ENCODE measurements at regions of chr6 and their contacts with region 1.

Region 1: GRCh38 chr6:79564636-79565035 is 27.4 kb upstream of the LCA5 start:
- DNase-seq: no peak
- H3K4me3 ChIP-seq: no peak overlapping the region
- H3K27ac ChIP-seq: no peak overlapping the region
- H3K4me1 ChIP-seq: no peaks in the 10 kb centered on the region
- H3K27me3 ChIP-seq: no peaks in the 10 kb centered on the region
- CTCF ChIP-seq: no peak
- EP300 ChIP-seq: no peak
- RAD21 ChIP-seq: no peak

Region 2: DNA sequence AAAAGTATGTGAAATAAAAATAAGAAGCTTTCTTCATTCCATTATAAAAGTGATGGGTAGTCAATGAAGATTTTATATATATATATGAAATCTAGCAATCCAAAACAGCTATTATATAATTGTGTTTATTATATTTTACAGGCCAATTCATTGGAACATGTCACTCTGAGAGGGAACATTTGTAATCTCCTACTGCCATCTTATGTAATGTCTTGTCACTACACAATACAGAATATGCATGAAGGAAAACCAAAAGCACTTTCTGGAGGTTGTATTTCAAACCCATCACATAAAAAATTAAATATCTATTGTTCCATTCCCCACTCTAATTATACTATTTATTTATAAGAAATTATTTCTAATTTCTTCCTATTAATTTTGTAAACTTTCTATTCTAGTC is 728.8 kb before region 1 on chr6:
- CTCF ChIA-PET with region 1: no interaction called
- POLR2A ChIA-PET with region 1: no interaction called
- DNase-seq: no peak
- H3K4me3 ChIP-seq: no peak overlapping the region
- H3K27ac ChIP-seq: no peak overlapping the region
- H3K4me1 ChIP-seq: no peaks in the 10 kb centered on the region; a peak in 1 of 4 replicates
- H3K27me3 ChIP-seq: no peaks in the 10 kb centered on the region
- CTCF ChIP-seq: peak; percentile 56
- EP300 ChIP-seq: no peak
- RAD21 ChIP-seq: peak; percentile 66

Region 3: DNA sequence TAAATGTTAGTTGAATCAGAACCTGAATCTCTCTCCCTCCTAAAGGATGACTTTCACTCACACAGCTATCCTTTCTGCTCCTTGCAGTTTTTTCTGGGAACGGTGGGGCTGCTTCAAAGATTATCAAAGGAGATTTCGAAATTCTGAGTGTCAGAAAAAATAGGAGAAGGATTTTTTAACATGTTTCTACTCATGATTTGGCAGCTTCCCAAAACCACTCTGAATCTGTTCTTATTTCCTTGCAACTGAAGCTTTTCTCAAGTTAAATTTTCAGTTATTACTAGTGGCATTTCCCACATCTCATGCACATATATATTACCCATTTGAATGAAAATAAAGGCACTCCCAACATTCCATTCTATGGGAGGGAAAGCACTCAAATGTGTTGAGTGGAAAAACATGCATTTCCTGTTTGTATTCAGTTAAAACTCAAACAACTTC is 151.1 kb before region 1 on chr6:
- CTCF ChIA-PET with region 1: no interaction called
- POLR2A ChIA-PET with region 1: no interaction called
- DNase-seq: no peak
- H3K4me3 ChIP-seq: no peak overlapping the region
- H3K27ac ChIP-seq: no peak overlapping the region
- H3K4me1 ChIP-seq: peaks cover 0 to 9% of the 10 kb centered on the region in 2 experiments; a peak in 2 of 4 replicates
- H3K27me3 ChIP-seq: no peaks in the 10 kb centered on the region
- CTCF ChIP-seq: no peak
- EP300 ChIP-seq: no peak
- RAD21 ChIP-seq: no peak

Region 4: GRCh38 chr6:79544939-79545450 is 19.6 kb before region 1 on chr6:
- CTCF ChIA-PET with region 1: interaction called, 13 read pairs
- POLR2A ChIA-PET with region 1: no interaction called
- DNase-seq: peak; percentile 75
- H3K4me3 ChIP-seq: peak overlapping the region in 1 of 2 experiments; percentile 14; a peak in 3 of 4 replicates
- H3K27ac ChIP-seq: peak overlapping the region; percentile 83 to 89
- H3K4me1 ChIP-seq: peaks cover 12 to 22% of the 10 kb centered on the region in 2 experiments
- H3K27me3 ChIP-seq: no peaks in the 10 kb centered on the region
- CTCF ChIP-seq: peak; percentile 61
- EP300 ChIP-seq: peak; percentile 33 to 72; a peak in 2 of 4 replicates
- RAD21 ChIP-seq: peak; percentile 48